CD4-positive, alpha-beta T cell (primary cell): ENCODE measurements at regions of chr22 and their contacts with region 1.

Region 1: GRCh38 chr22:17009640-17010291 is 1.7 kb upstream of the GAB4 start:
- DNase-seq: no peak
- ATAC-seq: no peak
- H3K4me3 ChIP-seq: no peak overlapping the region
- H3K4me3 Mint-ChIP-seq: no peak overlapping the region
- H3K27ac ChIP-seq: no peak overlapping the region
- H3K27ac Mint-ChIP-seq: no peak overlapping the region
- H3K4me1 ChIP-seq: no peaks in the 10 kb centered on the region
- H3K4me1 Mint-ChIP-seq: no peaks in the 10 kb centered on the region
- H3K27me3 ChIP-seq: peaks cover 12 to 18% of the 10 kb centered on the region in 2 experiments
- H3K27me3 Mint-ChIP-seq: peaks cover 84% of the 10 kb centered on the region
- CTCF ChIP-seq: no peak

Region 2: GRCh38 chr22:16949561-16949960 is 60.2 kb before region 1 on chr22:
- CTCF ChIA-PET with region 1: no interaction called
- POLR2A ChIA-PET with region 1: no interaction called
- intact Hi-C with region 1: loop called in 1 of 2 experiments (anchors 10 kb)
- DNase-seq: no peak
- ATAC-seq: no peak
- H3K4me3 ChIP-seq: no peak overlapping the region
- H3K4me3 Mint-ChIP-seq: no peak overlapping the region
- H3K27ac ChIP-seq: no peak overlapping the region
- H3K27ac Mint-ChIP-seq: no peak overlapping the region
- H3K4me1 ChIP-seq: no peaks in the 10 kb centered on the region
- H3K4me1 Mint-ChIP-seq: no peaks in the 10 kb centered on the region
- H3K27me3 ChIP-seq: no peaks in the 10 kb centered on the region
- H3K27me3 Mint-ChIP-seq: no peaks in the 10 kb centered on the region
- CTCF ChIP-seq: no peak

Region 3: DNA sequence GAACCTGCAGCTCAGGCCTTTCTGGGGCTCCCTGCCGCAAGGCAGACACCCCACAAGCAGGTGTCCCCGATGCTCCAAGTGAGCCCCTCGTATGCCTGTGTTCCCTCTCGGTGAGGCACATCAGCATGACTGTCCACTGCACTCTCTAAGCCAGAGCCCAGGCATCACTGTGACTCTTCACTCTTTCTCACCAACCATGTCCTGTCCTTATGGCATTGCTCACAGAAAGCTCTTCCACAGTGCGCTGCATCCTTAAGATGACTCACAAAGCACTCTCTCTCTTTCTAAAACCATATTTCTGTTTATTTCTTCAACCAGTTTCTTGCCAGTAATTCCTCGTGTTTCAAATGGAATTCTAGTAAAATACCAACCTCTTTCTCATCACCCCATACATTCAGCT is 19.9 kb before region 1 on chr22:
- CTCF ChIA-PET with region 1: no interaction called
- POLR2A ChIA-PET with region 1: no interaction called
- intact Hi-C with region 1: no loop called
- DNase-seq: no peak
- ATAC-seq: no peak
- H3K4me3 ChIP-seq: no peak overlapping the region
- H3K4me3 Mint-ChIP-seq: no peak overlapping the region
- H3K27ac ChIP-seq: no peak overlapping the region
- H3K27ac Mint-ChIP-seq: no peak overlapping the region
- H3K4me1 ChIP-seq: no peaks in the 10 kb centered on the region
- H3K4me1 Mint-ChIP-seq: no peaks in the 10 kb centered on the region
- H3K27me3 ChIP-seq: peaks cover 0 to 4% of the 10 kb centered on the region in 2 experiments
- H3K27me3 Mint-ChIP-seq: peaks cover 9% of the 10 kb centered on the region
- CTCF ChIP-seq: no peak

Region 4: GRCh38 chr22:17074648-17075002 is 64.9 kb after region 1 on chr22:
- CTCF ChIA-PET with region 1: no interaction called
- POLR2A ChIA-PET with region 1: no interaction called
- intact Hi-C with region 1: no loop called
- DNase-seq: no peak
- ATAC-seq: no peak
- H3K4me3 ChIP-seq: no peak overlapping the region
- H3K4me3 Mint-ChIP-seq: no peak overlapping the region
- H3K27ac ChIP-seq: no peak overlapping the region
- H3K27ac Mint-ChIP-seq: no peak overlapping the region
- H3K4me1 ChIP-seq: peaks cover 11% of the 10 kb centered on the region
- H3K4me1 Mint-ChIP-seq: peaks cover 17% of the 10 kb centered on the region
- H3K27me3 ChIP-seq: no peaks in the 10 kb centered on the region
- H3K27me3 Mint-ChIP-seq: no peaks in the 10 kb centered on the region
- CTCF ChIP-seq: no peak

Region 5: GRCh38 chr22:17112486-17113042 is 102.8 kb after region 1 on chr22:
- CTCF ChIA-PET with region 1: no interaction called
- POLR2A ChIA-PET with region 1: no interaction called
- intact Hi-C with region 1: no loop called
- DNase-seq: no peak
- ATAC-seq: no peak
- H3K4me3 ChIP-seq: no peak overlapping the region
- H3K4me3 Mint-ChIP-seq: no peak overlapping the region
- H3K27ac ChIP-seq: no peak overlapping the region
- H3K27ac Mint-ChIP-seq: peak overlapping the region; percentile 80
- H3K4me1 ChIP-seq: peaks cover 43% of the 10 kb centered on the region
- H3K4me1 Mint-ChIP-seq: peaks cover 74% of the 10 kb centered on the region
- H3K27me3 ChIP-seq: no peaks in the 10 kb centered on the region
- H3K27me3 Mint-ChIP-seq: no peaks in the 10 kb centered on the region
- CTCF ChIP-seq: no peak